ENCODE measurements at regions of chr2 and their contacts with region 1.

Region 1: GRCh38 chr2:191555092-191555742 is 122.7 kb upstream of the NABP1 start:
- DNase-seq: peak; percentile 89
- H3K4me3 ChIP-seq: no peak overlapping the region
- H3K27ac ChIP-seq: no peak overlapping the region
- H3K4me1 ChIP-seq: peaks cover 0 to 11% (median 3%) of the 10 kb centered on the region in 4 donors
- H3K27me3 ChIP-seq: no peaks in the 10 kb centered on the region
- CTCF ChIP-seq: peak; percentile 55 to 62 (median 57)
- EP300 ChIP-seq: no peak
- POLR2A ChIP-seq: no peak

Region 2: GRCh38 chr2:191401287-191401686 is 153.9 kb before region 1 on chr2:
- intact Hi-C with region 1: no loop called
- DNase-seq: no peak
- H3K4me3 ChIP-seq: no peak overlapping the region
- H3K27ac ChIP-seq: no peak overlapping the region
- H3K4me1 ChIP-seq: no peaks in the 10 kb centered on the region
- H3K27me3 ChIP-seq: no peaks in the 10 kb centered on the region
- CTCF ChIP-seq: no peak
- EP300 ChIP-seq: no peak
- POLR2A ChIP-seq: no peak

Region 3: DNA sequence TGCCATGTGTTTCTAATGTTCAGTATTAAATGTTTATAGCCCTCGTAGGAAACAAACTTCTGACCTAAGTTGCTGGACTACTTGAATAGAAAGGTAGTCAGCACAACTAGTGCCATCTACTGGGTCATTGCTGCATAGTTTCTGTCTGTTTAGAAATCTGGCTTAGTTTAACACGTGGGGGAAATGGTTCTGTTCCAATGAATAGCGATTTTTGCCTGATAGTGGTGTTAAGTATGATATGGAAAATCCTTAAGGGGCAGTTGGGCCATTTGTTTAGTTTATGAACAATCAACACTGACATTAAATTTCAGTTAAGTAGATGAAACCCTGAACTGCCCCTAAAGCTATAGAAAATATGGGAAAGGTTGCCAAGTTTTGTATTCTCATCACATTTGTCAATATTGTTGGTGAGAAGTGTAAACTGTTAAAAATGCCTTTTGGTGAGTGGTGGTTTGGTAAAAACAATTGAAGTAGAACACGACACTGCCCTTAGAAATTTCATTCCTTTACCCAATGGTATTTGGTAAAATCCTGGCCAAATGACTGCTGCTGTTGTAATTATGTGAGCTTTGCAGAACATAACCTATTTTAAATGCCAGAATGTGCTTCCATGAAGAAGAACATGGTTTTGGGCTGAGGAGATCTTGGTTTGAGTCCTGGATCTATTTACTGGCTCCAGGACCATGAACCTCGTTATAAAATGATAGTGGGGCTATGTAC is 136.0 kb after region 1 on chr2:
- intact Hi-C with region 1: loop called (anchors 2 kb)
- DNase-seq: no peak
- H3K4me3 ChIP-seq: no peak overlapping the region
- H3K27ac ChIP-seq: no peak overlapping the region
- H3K4me1 ChIP-seq: peaks cover 0 to 14% (median 2%) of the 10 kb centered on the region in 4 donors
- H3K27me3 ChIP-seq: peaks cover 0 to 3% (median 0%) of the 10 kb centered on the region in 3 donors
- CTCF ChIP-seq: peak; percentile 47 to 67 (median 62)
- EP300 ChIP-seq: no peak
- POLR2A ChIP-seq: no peak

Region 4: DNA sequence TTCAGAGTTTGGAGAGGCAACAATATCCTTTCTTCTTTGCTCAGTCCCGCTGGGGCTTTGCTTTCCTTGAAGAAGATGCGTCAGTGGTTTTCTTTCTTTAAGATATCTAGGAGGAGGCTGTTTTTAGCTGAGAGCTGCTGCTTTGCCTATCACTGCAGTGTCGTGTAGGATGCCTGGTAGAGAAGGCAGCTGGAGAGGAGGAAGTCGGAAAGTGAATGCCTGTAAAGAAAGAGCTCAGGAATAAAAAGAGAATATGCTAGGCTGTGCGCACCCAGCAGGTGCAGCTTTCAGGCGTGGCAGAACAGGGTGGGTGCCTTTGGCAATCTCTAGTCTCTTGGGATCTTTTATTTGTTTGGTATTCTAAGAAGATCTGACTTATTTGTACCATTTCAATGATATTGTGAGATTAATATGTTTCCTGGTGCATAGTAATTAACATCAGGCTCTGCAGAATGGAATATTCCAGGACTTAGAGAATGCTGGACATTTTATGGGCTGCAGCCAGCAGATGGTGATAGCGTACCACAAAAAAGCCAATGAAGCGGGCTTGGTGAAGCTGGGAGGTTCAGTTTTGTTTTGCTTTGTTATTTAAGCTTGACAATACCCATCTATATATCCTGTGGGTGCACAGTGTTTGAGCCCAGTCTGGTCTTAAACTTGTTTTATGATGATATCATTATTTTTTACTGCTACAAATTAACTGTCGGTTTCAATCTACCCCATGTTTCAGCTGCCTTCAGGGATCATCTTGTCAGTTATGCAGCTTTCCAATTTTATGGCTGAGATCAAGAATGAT is 256.8 kb after region 1 on chr2:
- intact Hi-C with region 1: loop called (anchors 5 kb)
- DNase-seq: peak; percentile 73
- H3K4me3 ChIP-seq: peak overlapping the region in 1 of 4 donors; percentile 4
- H3K27ac ChIP-seq: no peak overlapping the region
- H3K4me1 ChIP-seq: peaks cover 0 to 3% (median 0%) of the 10 kb centered on the region in 4 donors
- H3K27me3 ChIP-seq: no peaks in the 10 kb centered on the region
- CTCF ChIP-seq: peak; percentile 52 to 77 (median 68)
- EP300 ChIP-seq: no peak
- POLR2A ChIP-seq: no peak

Region 5: GRCh38 chr2:192162392-192163042 is 607.3 kb after region 1 on chr2:
- intact Hi-C with region 1: loop called (anchors 5 kb)
- DNase-seq: peak; percentile 80
- H3K4me3 ChIP-seq: peak overlapping the region in 3 of 4 donors; percentile 8 to 23 (median 18)
- H3K27ac ChIP-seq: no peak overlapping the region
- H3K4me1 ChIP-seq: peaks cover 0 to 6% (median 5%) of the 10 kb centered on the region in 4 donors
- H3K27me3 ChIP-seq: no peaks in the 10 kb centered on the region
- CTCF ChIP-seq: peak; percentile 74 to 96 (median 90)
- EP300 ChIP-seq: no peak
- POLR2A ChIP-seq: no peak